ENCODE measurements at regions of chrX and their contacts with region 1.

Region 1: DNA sequence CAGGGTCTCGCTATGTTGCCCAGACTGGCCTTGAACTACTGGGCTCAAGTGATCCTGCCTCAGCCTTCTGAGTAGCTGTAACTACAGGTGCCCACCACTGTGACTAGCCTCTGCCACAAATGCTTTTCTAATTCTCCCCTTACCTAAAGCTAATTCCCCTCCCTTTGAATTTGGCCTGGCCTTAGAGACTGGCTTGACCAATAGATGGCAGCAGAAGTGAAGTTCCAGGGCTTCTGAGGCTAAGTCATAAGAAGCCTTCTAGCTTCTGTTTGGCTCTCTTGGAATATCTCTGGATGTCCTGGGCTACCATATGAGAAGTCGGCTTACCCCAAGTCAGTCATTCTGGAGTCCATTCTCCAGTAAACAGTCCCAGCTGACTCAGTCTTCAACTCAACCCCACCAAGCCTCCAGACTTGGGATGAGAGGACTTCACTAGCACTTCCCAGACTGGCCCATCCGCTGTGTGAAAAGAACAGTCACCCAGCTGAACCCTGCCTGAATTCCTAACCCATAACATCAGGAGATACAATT is 61.0 kb downstream of the HPRT1 start:
- DNase-seq: peak; percentile 64

Region 2: DNA sequence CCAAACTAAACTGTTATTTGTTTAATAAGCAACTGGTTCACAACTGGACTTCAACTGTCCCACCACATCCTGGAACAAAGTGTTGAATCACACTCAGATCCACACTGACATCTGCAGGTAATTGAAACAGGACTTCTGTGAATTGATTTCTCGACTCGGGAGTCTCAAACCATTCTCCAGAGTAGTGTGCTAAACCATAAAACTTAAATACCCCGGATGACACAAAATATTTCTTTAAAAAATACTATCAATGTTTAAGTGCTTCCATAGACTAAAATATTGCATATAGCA is 232.7 kb after region 1 on chrX:
- CTCF ChIA-PET with region 1: interaction called, 26 read pairs
- POLR2A ChIA-PET with region 1: no interaction called
- DNase-seq: peak; percentile 37

Measured in HEK293T (cell line).